GM12878 (cell line): ENCODE measurements at regions of chr14 and their contacts with region 1.

Region 1: DNA sequence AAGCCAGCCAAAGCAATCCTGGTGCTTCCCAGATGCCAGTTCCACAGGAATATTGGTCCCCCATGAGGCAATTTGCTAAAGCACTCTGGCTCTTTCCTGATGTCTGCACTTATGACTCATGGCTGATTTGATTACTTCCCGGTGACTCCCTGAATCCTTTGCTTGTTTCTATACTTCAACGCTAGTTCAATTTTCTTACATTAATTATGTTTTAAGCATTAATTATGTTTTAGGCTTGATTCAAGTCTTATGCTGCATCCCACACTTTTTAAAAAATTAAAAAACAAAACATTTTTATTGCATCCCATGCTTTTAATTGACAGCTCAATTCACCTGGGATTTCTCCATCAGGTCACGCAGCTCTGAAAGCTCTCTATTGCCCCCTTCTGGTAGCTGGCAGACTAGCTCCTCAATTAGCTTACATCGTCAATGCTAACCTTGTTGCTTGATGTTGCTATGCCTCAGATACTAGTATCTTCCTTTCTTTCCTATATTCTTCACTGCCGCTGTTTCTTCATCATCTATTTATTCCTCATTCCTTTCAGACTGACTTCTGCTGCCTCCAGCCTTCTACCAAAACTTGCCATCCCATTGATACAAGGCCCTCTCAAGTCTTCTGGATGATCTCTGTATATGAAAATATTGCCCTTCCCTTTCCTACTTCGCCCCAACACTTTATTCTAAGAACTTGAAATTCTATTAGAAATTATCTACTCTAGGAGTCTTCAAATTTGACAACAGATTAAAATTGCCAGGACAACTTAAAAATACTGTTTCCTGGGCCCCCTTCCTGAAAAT is 32.0 kb downstream of the TSHR start:
- DNase-seq: no peak
- ATAC-seq: peak; percentile 86
- H3K4me3 ChIP-seq: no peak overlapping the region
- H3K27ac ChIP-seq: no peak overlapping the region
- H3K4me1 ChIP-seq: no peaks in the 10 kb centered on the region
- H3K27me3 ChIP-seq: peaks cover 2 to 14% of the 10 kb centered on the region in 2 experiments
- CTCF ChIP-seq: peak; percentile 88 to 90 (median 89)
- EP300 ChIP-seq: no peak
- POLR2A ChIP-seq: no peak
- RAD21 ChIP-seq: peak; percentile 91

Region 2: GRCh38 chr14:80213599-80213998 is 773.8 kb before region 1 on chr14:
- CTCF ChIA-PET with region 1: interaction called, 10 read pairs
- POLR2A ChIA-PET with region 1: no interaction called
- RAD21 ChIA-PET with region 1: interaction called, 3 read pairs
- SMC1A ChIA-PET with region 1: interaction called, 4 read pairs
- in situ Hi-C with region 1: no loop called
- intact Hi-C with region 1: loop called (anchors 10 kb)
- DNase-seq: no peak
- ATAC-seq: peak; percentile 91
- H3K4me3 ChIP-seq: no peak overlapping the region
- H3K27ac ChIP-seq: no peak overlapping the region
- H3K4me1 ChIP-seq: no peaks in the 10 kb centered on the region
- H3K27me3 ChIP-seq: no peaks in the 10 kb centered on the region; a peak in 1 of 4 replicates
- CTCF ChIP-seq: peak; percentile 44 to 64 (median 48); a peak in 5 of 6 replicates
- EP300 ChIP-seq: no peak
- POLR2A ChIP-seq: no peak
- RAD21 ChIP-seq: peak; percentile 63

Region 3: GRCh38 chr14:80504781-80505180 is 482.7 kb before region 1 on chr14:
- CTCF ChIA-PET with region 1: no interaction called
- POLR2A ChIA-PET with region 1: no interaction called
- RAD21 ChIA-PET with region 1: no interaction called
- SMC1A ChIA-PET with region 1: no interaction called
- in situ Hi-C with region 1: no loop called
- intact Hi-C with region 1: no loop called
- DNase-seq: no peak
- ATAC-seq: no peak
- H3K4me3 ChIP-seq: no peak overlapping the region
- H3K27ac ChIP-seq: no peak overlapping the region
- H3K4me1 ChIP-seq: no peaks in the 10 kb centered on the region
- H3K27me3 ChIP-seq: no peaks in the 10 kb centered on the region
- CTCF ChIP-seq: no peak
- EP300 ChIP-seq: no peak
- POLR2A ChIP-seq: no peak
- RAD21 ChIP-seq: no peak

Region 4: GRCh38 chr14:80522936-80523335 is 464.5 kb before region 1 on chr14:
- CTCF ChIA-PET with region 1: no interaction called
- POLR2A ChIA-PET with region 1: no interaction called
- RAD21 ChIA-PET with region 1: no interaction called
- SMC1A ChIA-PET with region 1: no interaction called
- in situ Hi-C with region 1: no loop called
- intact Hi-C with region 1: no loop called
- DNase-seq: no peak
- ATAC-seq: no peak
- H3K4me3 ChIP-seq: no peak overlapping the region
- H3K27ac ChIP-seq: no peak overlapping the region
- H3K4me1 ChIP-seq: no peaks in the 10 kb centered on the region
- H3K27me3 ChIP-seq: no peaks in the 10 kb centered on the region
- CTCF ChIP-seq: no peak
- EP300 ChIP-seq: no peak
- POLR2A ChIP-seq: no peak
- RAD21 ChIP-seq: no peak

Region 5: DNA sequence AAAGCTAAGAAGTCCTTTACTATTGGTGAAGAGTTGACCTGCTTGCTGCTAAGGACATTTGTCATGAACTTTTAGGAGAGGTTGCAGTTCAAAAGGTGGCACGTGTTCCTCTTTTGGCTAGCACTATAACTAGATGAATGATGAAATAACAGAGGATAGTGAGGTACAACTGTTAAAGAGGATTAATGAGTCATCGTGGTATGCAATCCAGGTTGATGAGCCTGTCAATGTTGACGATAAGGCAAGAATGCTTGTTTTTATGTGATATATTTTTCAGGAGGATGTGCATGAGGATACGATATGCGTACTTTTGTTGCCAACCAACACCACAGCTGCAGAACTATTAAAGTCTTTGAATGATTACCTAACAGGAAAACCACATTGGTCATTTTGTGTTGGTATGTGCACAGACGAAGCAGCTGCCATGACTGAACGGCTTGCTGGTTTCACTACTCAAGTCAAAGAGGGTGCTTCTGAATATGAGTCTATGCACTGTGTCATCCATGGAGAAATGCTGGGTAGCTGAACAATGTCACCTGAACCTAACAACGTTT is 56.5 kb before region 1 on chr14:
- CTCF ChIA-PET with region 1: interaction called, 12 read pairs
- POLR2A ChIA-PET with region 1: no interaction called
- RAD21 ChIA-PET with region 1: no interaction called
- SMC1A ChIA-PET with region 1: interaction called, 6 read pairs
- in situ Hi-C with region 1: no loop called
- intact Hi-C with region 1: no loop called
- DNase-seq: peak; percentile 88
- ATAC-seq: peak; percentile 97
- H3K4me3 ChIP-seq: peak overlapping the region; percentile 53
- H3K27ac ChIP-seq: peak overlapping the region; percentile 47; the same call in 1 of the 2 replicates
- H3K4me1 ChIP-seq: peaks cover 29% of the 10 kb centered on the region
- H3K27me3 ChIP-seq: no peaks in the 10 kb centered on the region
- CTCF ChIP-seq: no peak
- EP300 ChIP-seq: peak; percentile 83 to 89
- POLR2A ChIP-seq: no peak
- RAD21 ChIP-seq: no peak

Region 6: DNA sequence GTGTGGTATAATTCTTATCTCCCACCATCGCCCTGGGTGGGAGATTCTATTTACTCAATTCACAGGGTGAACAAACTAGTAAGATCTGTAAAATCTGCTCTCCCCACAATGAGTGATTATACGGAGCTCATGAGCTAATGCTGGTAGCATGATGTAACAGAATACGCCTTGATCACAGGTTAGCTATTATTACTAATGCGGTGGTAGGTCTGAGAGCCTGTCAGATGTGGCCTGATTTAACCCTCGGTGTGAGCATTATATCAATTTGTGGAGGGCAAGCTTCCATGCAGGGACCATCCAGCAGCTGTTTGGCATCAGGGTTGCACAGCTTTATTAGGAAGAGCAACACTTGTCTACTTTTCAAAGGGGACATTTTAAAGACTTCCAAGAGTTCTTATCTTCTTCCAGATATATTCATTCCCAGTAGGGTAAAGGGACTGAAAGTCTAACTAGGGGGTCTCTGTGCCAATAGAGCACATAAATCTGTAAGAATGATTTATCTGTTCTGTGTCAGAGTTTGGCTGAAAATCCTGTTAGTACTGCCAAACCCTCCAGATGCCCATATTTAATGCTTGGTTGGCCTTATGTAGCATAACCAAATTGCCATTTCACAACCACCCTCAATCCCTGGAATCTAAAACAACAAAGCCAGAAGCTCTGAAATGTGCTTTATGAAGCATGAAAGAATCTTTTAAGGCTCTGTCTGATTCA is 13.3 kb before region 1 on chr14:
- CTCF ChIA-PET with region 1: interaction called, 132 read pairs
- POLR2A ChIA-PET with region 1: no interaction called
- RAD21 ChIA-PET with region 1: interaction called, 9 read pairs
- SMC1A ChIA-PET with region 1: interaction called, 30 read pairs
- in situ Hi-C with region 1: no loop called
- intact Hi-C with region 1: no loop called
- DNase-seq: no peak
- ATAC-seq: no peak
- H3K4me3 ChIP-seq: no peak overlapping the region
- H3K27ac ChIP-seq: no peak overlapping the region
- H3K4me1 ChIP-seq: no peaks in the 10 kb centered on the region
- H3K27me3 ChIP-seq: peaks cover 0 to 8% of the 10 kb centered on the region in 2 experiments; a peak in 2 of 4 replicates
- CTCF ChIP-seq: no peak
- EP300 ChIP-seq: no peak
- POLR2A ChIP-seq: no peak
- RAD21 ChIP-seq: no peak

Region 7: GRCh38 chr14:81164167-81164774 is 176.8 kb after region 1 on chr14:
- CTCF ChIA-PET with region 1: interaction called, 23 read pairs
- POLR2A ChIA-PET with region 1: no interaction called
- RAD21 ChIA-PET with region 1: interaction called, 13 read pairs
- SMC1A ChIA-PET with region 1: interaction called, 10 read pairs
- in situ Hi-C with region 1: no loop called
- intact Hi-C with region 1: no loop called
- DNase-seq: peak; percentile 48
- ATAC-seq: peak; percentile 97
- H3K4me3 ChIP-seq: no peak overlapping the region
- H3K27ac ChIP-seq: no peak overlapping the region
- H3K4me1 ChIP-seq: 0 out of 2 replicates have a peak, but pooled peaks cover 2% of the 10 kb centered on the region
- H3K27me3 ChIP-seq: no peaks in the 10 kb centered on the region
- CTCF ChIP-seq: peak; percentile 77 to 79 (median 77)
- EP300 ChIP-seq: no peak
- POLR2A ChIP-seq: no peak
- RAD21 ChIP-seq: peak; percentile 89

Region 8: GRCh38 chr14:81464247-81465002 is 477.0 kb after region 1 on chr14:
- CTCF ChIA-PET with region 1: interaction called, 7 read pairs
- POLR2A ChIA-PET with region 1: no interaction called
- RAD21 ChIA-PET with region 1: interaction called, 3 read pairs
- SMC1A ChIA-PET with region 1: interaction called, 5 read pairs
- in situ Hi-C with region 1: no loop called
- intact Hi-C with region 1: loop called (anchors 5 kb)
- DNase-seq: peak; percentile 64
- ATAC-seq: peak; percentile 76
- H3K4me3 ChIP-seq: peak overlapping the region; percentile 77; the same call in 1 of the 2 replicates
- H3K27ac ChIP-seq: peak overlapping the region; percentile 83
- H3K4me1 ChIP-seq: peaks cover 5% of the 10 kb centered on the region
- H3K27me3 ChIP-seq: no peaks in the 10 kb centered on the region
- CTCF ChIP-seq: peak; percentile 82 to 92 (median 87)
- EP300 ChIP-seq: no peak
- POLR2A ChIP-seq: no peak
- RAD21 ChIP-seq: peak; percentile 94